Dorsolateral prefrontal cortex (tissue), 120 donors: ENCODE measurements at regions of chr5 and their contacts with region 1.

Region 1: DNA sequence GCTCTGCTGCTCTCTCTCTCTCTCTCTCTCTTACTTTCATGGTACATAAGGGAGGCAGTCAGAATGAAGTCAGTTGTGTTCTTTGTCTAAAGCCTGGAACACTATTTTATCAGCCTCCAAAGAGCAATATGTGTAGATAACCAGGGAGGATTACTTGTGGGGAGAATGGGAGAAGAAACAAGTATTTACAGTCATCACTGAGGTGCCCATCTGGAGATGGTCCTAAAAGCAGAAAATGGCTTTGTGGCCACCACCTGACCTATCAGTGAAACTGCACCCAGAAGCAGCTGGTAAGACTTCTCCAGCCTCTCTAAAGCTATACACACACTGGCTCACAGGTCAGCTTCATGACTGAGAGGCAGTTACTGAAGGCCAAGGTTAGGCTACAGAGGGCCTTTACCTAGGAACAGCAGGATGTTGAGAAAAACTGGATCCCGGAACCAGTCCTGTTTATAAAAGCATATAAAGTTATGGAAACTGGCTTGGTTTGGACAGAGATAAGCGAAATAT is 75.1 kb downstream of the MRPS27 start:
- DNase-seq: peak in 7 of 10 donors; percentile 42 to 62 (median 48)
- H3K4me3 ChIP-seq: peak overlapping the region in 1 of 59 donors; percentile 4
- H3K27ac ChIP-seq: peak overlapping the region in 57 of 59 donors; percentile 2 to 98 (median 87)
- H3K27me3 ChIP-seq: no peaks in the 10 kb centered on the region
- CTCF ChIP-seq: peak in 52 of 56 donors; percentile 24 to 73 (median 54)

Region 2: GRCh38 chr5:72138943-72139521 is 105.9 kb before region 1 on chr5:
- intact Hi-C with region 1: loop called (anchors 2 to 10 kb)
- DNase-seq: no peak
- H3K4me3 ChIP-seq: no peak overlapping the region
- H3K27ac ChIP-seq: peak overlapping the region in 15 of 59 donors; percentile 8 to 60 (median 18)
- H3K27me3 ChIP-seq: no peaks in the 10 kb centered on the region
- CTCF ChIP-seq: no peak

Region 3: GRCh38 chr5:72179028-72179815 is 65.7 kb before region 1 on chr5:
- intact Hi-C with region 1: loop called (anchors 1 to 5 kb)
- DNase-seq: peak in 7 of 10 donors; percentile 37 to 76 (median 61)
- H3K4me3 ChIP-seq: peak overlapping the region; percentile 32 to 78 (median 55)
- H3K27ac ChIP-seq: peak overlapping the region; percentile 52 to 95 (median 87)
- H3K27me3 ChIP-seq: no peaks in the 10 kb centered on the region
- CTCF ChIP-seq: peak in 1 of 56 donors; percentile 14